ENCODE measurements at regions of chr3 and their contacts with region 1.

Region 1: GRCh38 chr3:64224826-64225610 is at the start of gene PRICKLE2:
- DNase-seq: peak; percentile 35
- ATAC-seq: peak; percentile 90
- H3K4me3 ChIP-seq: no peak within 1 kb of the TSS
- H3K27ac ChIP-seq: no peak within 1 kb of the TSS
- H3K4me1 ChIP-seq: no peaks in the 10 kb centered on the region; the same call in 1 of the 2 replicates
- H3K27me3 ChIP-seq: no peaks in the 10 kb centered on the region
- CTCF ChIP-seq: no peak; a peak in 1 of 6 replicates
- EP300 ChIP-seq: no peak
- POLR2A ChIP-seq: 0 out of 2 replicates have a peak, but pooled peaks have one; percentile 36
- RAD21 ChIP-seq: peak; percentile 7; the same call in 1 of the 2 replicates
- polyA plus RNA-seq, gene PRICKLE2: 0.11 to 0.24 TPM

Region 2: DNA sequence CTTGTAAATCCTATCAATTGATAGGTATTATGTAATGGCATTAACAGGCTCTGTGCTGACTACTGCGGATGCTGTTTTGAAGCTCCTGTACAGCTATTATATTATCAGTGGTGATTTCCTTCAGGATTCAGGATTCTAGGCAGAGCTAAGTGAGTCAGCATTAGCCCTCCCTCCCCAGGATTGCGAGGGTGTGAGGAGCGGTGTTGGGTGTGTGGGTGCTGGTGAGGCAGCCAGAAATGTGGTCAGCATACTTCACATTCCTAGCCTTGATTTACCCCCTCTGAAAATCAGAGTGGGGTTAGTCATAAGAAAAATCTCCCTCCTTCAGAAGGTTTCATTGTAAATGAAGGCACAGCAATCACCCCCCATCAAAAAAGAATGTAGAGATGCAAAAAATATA is 500.0 kb before region 1 on chr3:
- CTCF ChIA-PET with region 1: no interaction called
- POLR2A ChIA-PET with region 1: no interaction called
- RAD21 ChIA-PET with region 1: no interaction called
- SMC1A ChIA-PET with region 1: no interaction called
- in situ Hi-C with region 1: no loop called
- intact Hi-C with region 1: no loop called
- DNase-seq: no peak
- ATAC-seq: no peak
- H3K4me3 ChIP-seq: no peak overlapping the region
- H3K27ac ChIP-seq: no peak overlapping the region
- H3K4me1 ChIP-seq: no peaks in the 10 kb centered on the region
- H3K27me3 ChIP-seq: no peaks in the 10 kb centered on the region
- CTCF ChIP-seq: no peak
- EP300 ChIP-seq: no peak
- POLR2A ChIP-seq: no peak
- RAD21 ChIP-seq: no peak

Region 3: GRCh38 chr3:64030741-64031140 is 194.3 kb before region 1 on chr3:
- CTCF ChIA-PET with region 1: interaction called, 30 read pairs
- POLR2A ChIA-PET with region 1: no interaction called
- RAD21 ChIA-PET with region 1: interaction called, 14 read pairs
- SMC1A ChIA-PET with region 1: interaction called, 29 read pairs
- in situ Hi-C with region 1: no loop called
- intact Hi-C with region 1: loop called (anchors 10 kb)
- DNase-seq: peak; percentile 41
- ATAC-seq: peak; percentile 99
- H3K4me3 ChIP-seq: no peak overlapping the region; the same call in 1 of the 2 replicates
- H3K27ac ChIP-seq: no peak overlapping the region
- H3K4me1 ChIP-seq: no peaks in the 10 kb centered on the region; the same call in 1 of the 2 replicates
- H3K27me3 ChIP-seq: no peaks in the 10 kb centered on the region
- CTCF ChIP-seq: peak; percentile 79 to 97 (median 89); a peak in 5 of 6 replicates
- EP300 ChIP-seq: no peak
- POLR2A ChIP-seq: no peak
- RAD21 ChIP-seq: peak; percentile 97

Region 4: DNA sequence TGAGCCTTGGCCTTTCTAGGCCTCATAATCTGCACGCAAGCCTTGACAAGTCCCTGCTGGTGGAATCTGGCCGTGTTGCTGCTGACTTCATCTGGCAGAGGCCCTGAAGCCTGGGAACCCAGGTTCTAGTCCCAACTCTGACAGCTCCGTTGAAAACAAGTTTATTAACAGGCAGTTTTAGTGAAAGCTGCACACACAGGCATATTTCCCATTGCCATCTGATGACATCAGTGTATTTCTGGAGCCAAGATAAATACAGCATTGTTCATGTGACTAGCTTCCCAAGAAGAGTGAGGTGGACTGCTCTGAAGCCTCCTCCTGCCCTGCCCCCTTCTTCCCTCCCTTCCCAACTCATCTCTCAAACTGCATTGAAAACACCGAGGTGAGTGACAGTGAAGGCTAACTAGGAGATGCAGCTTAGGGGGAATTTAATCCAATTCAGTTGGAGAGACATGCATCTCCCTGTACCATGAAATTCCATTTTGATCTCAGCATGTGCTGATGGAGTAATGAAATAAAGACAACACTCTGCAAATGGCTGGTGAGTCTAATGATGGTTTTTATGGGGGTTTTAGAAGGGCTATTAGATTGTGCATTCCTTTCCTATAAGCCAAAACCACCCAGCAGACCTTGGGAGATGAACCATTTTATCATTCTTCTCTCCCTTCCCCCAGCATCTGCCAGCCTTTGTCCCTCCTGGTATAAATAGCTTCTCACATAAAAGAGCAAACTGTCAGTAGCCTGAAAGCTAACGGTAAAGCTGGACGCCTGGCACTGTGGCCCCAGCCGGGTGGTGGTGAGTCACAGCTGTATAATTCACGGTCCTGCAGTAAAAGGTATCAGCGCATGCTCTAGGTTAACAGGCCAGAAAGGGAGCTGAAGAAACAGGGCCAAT is 37.7 kb before region 1 on chr3:
- CTCF ChIA-PET with region 1: interaction called, 10 read pairs
- POLR2A ChIA-PET with region 1: no interaction called
- RAD21 ChIA-PET with region 1: interaction called, 3 read pairs
- SMC1A ChIA-PET with region 1: interaction called, 5 read pairs
- in situ Hi-C with region 1: no loop called
- intact Hi-C with region 1: no loop called
- DNase-seq: no peak
- ATAC-seq: no peak
- H3K4me3 ChIP-seq: no peak overlapping the region
- H3K27ac ChIP-seq: no peak overlapping the region
- H3K4me1 ChIP-seq: no peaks in the 10 kb centered on the region
- H3K27me3 ChIP-seq: no peaks in the 10 kb centered on the region
- CTCF ChIP-seq: no peak
- EP300 ChIP-seq: no peak
- POLR2A ChIP-seq: no peak
- RAD21 ChIP-seq: no peak

Region 5: DNA sequence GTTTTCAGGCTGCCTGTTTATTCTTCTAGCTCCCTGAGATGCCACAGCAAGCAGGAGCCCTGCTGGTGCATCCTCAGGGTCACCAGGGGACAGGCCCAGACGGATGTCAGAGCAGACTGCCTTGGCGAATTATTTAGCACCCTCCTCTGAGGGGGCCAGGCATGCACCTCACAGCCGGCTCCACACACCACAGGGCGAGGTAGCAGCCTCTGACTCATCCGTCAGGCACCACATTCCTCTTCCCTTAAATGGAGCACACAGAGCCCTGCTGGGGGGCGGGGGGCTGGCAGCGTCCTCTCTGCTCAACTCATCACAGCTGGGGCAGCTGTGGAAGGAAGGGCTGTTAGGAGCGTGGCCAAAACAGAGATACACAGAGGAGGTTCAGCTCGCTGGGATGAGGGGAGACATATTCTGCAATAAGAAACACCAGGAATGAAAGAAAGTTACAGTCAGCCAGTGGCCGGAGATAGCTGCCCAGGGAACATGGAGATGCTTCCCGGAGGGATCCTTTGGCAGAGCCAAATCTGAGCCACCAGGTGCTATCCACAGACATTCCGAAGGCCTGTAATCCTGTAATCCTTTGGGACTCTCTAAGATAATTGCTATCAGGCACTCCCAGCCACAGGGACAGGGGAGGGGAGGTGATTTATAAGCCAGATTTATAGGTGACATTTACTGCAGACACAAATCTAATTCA is 14.1 kb after region 1 on chr3:
- CTCF ChIA-PET with region 1: interaction called, 44 read pairs
- POLR2A ChIA-PET with region 1: interaction called, 4 read pairs
- RAD21 ChIA-PET with region 1: interaction called, 13 read pairs
- SMC1A ChIA-PET with region 1: interaction called, 27 read pairs
- in situ Hi-C with region 1: no loop called
- intact Hi-C with region 1: no loop called
- DNase-seq: no peak
- ATAC-seq: no peak
- H3K4me3 ChIP-seq: no peak overlapping the region
- H3K27ac ChIP-seq: no peak overlapping the region
- H3K4me1 ChIP-seq: no peaks in the 10 kb centered on the region
- H3K27me3 ChIP-seq: no peaks in the 10 kb centered on the region
- CTCF ChIP-seq: no peak
- EP300 ChIP-seq: no peak
- POLR2A ChIP-seq: no peak
- RAD21 ChIP-seq: no peak

Region 6: DNA sequence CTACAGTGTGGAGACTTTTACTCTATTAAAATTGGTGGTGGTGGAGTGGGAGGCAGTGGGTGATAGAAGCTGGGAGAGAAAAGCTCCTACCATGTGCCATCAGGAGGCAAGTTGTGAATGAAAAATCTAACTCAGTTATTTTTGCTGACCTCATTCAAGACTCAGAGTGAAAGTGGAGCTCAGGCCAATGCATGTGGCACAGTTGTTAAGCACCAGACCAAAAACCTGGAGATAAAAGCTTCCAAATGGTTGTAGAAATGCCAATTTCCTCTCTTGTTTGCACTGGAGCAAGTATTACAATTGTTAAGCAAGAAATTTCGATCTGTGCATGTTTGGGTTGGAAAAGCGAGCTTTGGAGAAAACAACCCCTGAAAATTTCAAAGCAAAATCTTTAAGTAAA is 81.7 kb after region 1 on chr3:
- CTCF ChIA-PET with region 1: interaction called, 8 read pairs
- POLR2A ChIA-PET with region 1: no interaction called
- RAD21 ChIA-PET with region 1: interaction called, 7 read pairs
- SMC1A ChIA-PET with region 1: interaction called, 11 read pairs
- in situ Hi-C with region 1: no loop called
- intact Hi-C with region 1: no loop called
- DNase-seq: no peak
- ATAC-seq: peak; percentile 21; the same call in 1 of the 3 replicates
- H3K4me3 ChIP-seq: no peak overlapping the region
- H3K27ac ChIP-seq: no peak overlapping the region
- H3K4me1 ChIP-seq: no peaks in the 10 kb centered on the region
- H3K27me3 ChIP-seq: no peaks in the 10 kb centered on the region
- CTCF ChIP-seq: no peak
- EP300 ChIP-seq: no peak
- POLR2A ChIP-seq: no peak
- RAD21 ChIP-seq: no peak

Region 7: DNA sequence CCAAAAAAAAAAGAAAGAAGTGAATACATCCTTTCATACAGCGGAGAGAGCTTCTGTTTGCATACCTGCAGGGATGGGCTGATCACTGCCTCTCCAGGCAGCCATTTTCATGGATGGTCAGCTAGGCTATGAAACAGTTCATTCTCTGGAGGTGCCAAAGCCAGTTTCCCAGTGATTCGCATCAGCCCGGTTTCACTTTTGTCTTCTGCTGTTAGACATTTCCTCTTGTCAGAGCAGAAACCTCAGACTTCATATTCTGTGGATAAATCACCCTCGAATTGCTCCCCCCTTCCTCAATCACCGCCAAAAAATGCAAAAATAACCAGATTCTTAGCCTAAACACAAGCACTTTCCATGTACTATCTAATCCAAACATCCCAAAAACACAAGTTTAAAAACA is 237.2 kb after region 1 on chr3:
- CTCF ChIA-PET with region 1: interaction called, 21 read pairs
- POLR2A ChIA-PET with region 1: no interaction called
- RAD21 ChIA-PET with region 1: interaction called, 30 read pairs
- SMC1A ChIA-PET with region 1: interaction called, 10 read pairs
- in situ Hi-C with region 1: no loop called
- intact Hi-C with region 1: no loop called
- DNase-seq: no peak
- ATAC-seq: no peak
- H3K4me3 ChIP-seq: no peak overlapping the region
- H3K27ac ChIP-seq: no peak overlapping the region
- H3K4me1 ChIP-seq: no peaks in the 10 kb centered on the region
- H3K27me3 ChIP-seq: no peaks in the 10 kb centered on the region
- CTCF ChIP-seq: no peak
- EP300 ChIP-seq: no peak
- POLR2A ChIP-seq: no peak
- RAD21 ChIP-seq: no peak

Measured in GM12878 (cell line).